Activated B cell treated with CpG ODN at 0.5 μM for 24 hours (primary cell): ENCODE measurements at regions of chr5 and their contacts with region 1.

Region 1: GRCh38 chr5:98989727-98990126 is 60.9 kb upstream of the CHD1 start:
- DNase-seq: no peak
- ATAC-seq: no peak
- H3K4me3 Mint-ChIP-seq: no peak overlapping the region
- H3K27ac Mint-ChIP-seq: peak overlapping the region; percentile 42
- H3K4me1 Mint-ChIP-seq: peaks cover 12% of the 10 kb centered on the region
- H3K27me3 Mint-ChIP-seq: no peaks in the 10 kb centered on the region
- CTCF ChIP-seq: no peak

Region 2: GRCh38 chr5:98975682-98976407 is 13.9 kb before region 1 on chr5:
- CTCF ChIA-PET with region 1: no interaction called
- POLR2A ChIA-PET with region 1: no interaction called
- intact Hi-C with region 1: loop called (anchors 2 kb)
- DNase-seq: no peak
- ATAC-seq: peak; percentile 78
- H3K4me3 Mint-ChIP-seq: peak overlapping the region; percentile 11
- H3K27ac Mint-ChIP-seq: peak overlapping the region; percentile 32
- H3K4me1 Mint-ChIP-seq: peaks cover 25% of the 10 kb centered on the region
- H3K27me3 Mint-ChIP-seq: no peaks in the 10 kb centered on the region
- CTCF ChIP-seq: no peak